CD4-positive, alpha-beta T cell (primary cell): ENCODE measurements at regions of chr7 and their contacts with region 1.

Region 1: DNA sequence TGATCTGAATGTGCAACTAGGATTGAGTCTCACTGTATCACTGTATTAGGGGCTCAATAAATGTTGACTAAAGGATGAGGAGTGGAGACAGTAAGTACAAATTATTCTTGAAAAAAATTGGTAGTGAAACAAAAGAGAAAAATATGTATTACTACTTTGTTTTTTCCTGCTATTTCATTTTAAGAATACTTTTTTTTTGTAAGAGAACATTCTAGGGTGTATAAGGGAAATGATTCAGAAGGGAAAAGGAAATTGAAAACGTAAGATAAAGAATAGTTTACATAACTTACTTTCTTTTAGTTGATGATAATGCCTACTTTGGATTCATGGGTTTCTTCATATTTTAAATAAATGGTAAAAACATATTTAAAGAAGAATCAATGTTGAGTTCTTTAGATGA is 9.6 kb downstream of the CAPZA2 start:
- DNase-seq: no peak
- ATAC-seq: no peak
- H3K4me3 ChIP-seq: no peak overlapping the region
- H3K4me3 Mint-ChIP-seq: no peak overlapping the region
- H3K27ac ChIP-seq: no peak overlapping the region
- H3K27ac Mint-ChIP-seq: peak overlapping the region; percentile 40
- H3K4me1 ChIP-seq: peaks cover 15% of the 10 kb centered on the region
- H3K4me1 Mint-ChIP-seq: peaks cover 74% of the 10 kb centered on the region
- H3K27me3 ChIP-seq: no peaks in the 10 kb centered on the region
- H3K27me3 Mint-ChIP-seq: no peaks in the 10 kb centered on the region
- CTCF ChIP-seq: no peak

Region 2: DNA sequence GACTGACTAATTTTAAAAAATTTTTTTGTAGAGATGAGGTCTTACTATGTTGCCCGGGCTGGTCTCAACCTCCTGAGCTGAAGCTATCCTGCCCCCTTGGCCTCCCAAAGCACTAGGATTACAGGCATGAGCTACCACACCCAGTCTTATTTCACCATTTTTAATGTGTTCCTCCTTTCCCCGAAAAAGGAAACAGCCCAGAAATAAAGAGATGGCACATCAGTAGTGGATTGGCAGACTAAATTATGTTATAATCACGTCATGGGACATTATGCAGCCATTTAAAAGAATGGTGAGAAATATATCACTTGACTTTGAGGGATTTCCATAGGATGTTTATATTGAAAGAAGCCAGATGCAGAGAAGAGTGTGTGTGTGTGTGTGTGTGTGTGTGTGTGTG is 30.8 kb after region 1 on chr7:
- CTCF ChIA-PET with region 1: no interaction called
- POLR2A ChIA-PET with region 1: no interaction called
- intact Hi-C with region 1: no loop called
- DNase-seq: no peak
- ATAC-seq: no peak
- H3K4me3 ChIP-seq: no peak overlapping the region
- H3K4me3 Mint-ChIP-seq: no peak overlapping the region
- H3K27ac ChIP-seq: no peak overlapping the region
- H3K27ac Mint-ChIP-seq: no peak overlapping the region
- H3K4me1 ChIP-seq: no peaks in the 10 kb centered on the region
- H3K4me1 Mint-ChIP-seq: peaks cover 5% of the 10 kb centered on the region
- H3K27me3 ChIP-seq: no peaks in the 10 kb centered on the region
- H3K27me3 Mint-ChIP-seq: no peaks in the 10 kb centered on the region
- CTCF ChIP-seq: no peak

Region 3: DNA sequence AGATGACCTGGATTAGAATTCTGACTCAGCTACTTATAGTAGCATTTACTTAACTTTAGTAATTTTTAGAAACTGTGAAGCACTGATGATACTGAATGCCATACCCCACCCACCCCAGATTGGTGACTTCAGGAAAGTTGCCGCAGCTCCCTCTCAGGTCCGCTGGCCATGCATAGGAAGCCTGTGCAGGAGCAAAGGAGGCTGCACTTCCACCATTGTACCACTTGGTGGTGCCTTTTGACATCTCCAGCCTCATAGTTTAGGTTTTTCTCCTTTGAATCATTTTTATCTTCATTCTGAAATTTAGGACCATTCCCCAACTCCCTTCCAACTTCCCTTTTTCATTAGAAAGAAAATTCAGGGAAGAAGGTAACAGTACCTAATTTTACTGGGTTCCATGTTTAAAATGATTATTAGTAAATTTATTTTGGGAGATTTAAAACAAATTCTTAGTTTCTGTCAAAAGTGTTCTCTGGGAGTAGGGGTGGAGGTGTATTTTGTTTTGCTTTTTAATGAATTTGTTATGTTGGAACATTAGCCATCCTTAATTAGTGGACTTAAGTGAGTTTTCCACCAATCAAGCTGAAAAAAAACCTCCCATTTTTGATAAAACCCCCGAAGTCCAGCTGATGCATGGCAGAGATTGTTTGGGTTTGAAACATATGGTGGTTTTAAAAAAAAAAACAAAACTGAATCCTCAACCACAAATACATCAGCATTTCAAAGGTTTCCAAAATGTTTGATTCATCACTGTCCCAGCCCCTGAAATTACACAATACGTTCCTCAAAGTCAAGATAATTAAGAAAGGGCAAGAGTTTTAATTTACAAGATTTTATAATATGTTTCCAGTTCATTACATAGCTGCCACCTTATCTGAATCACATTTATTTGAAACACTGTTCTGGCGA is 341.2 kb after region 1 on chr7:
- CTCF ChIA-PET with region 1: no interaction called
- POLR2A ChIA-PET with region 1: no interaction called
- intact Hi-C with region 1: no loop called
- DNase-seq: peak in 12 of 14 experiments; percentile 3 to 62 (median 14)
- ATAC-seq: peak; percentile 65
- H3K4me3 ChIP-seq: no peak overlapping the region
- H3K4me3 Mint-ChIP-seq: no peak overlapping the region
- H3K27ac ChIP-seq: no peak overlapping the region
- H3K27ac Mint-ChIP-seq: no peak overlapping the region
- H3K4me1 ChIP-seq: no peaks in the 10 kb centered on the region
- H3K4me1 Mint-ChIP-seq: no peaks in the 10 kb centered on the region
- H3K27me3 ChIP-seq: no peaks in the 10 kb centered on the region
- H3K27me3 Mint-ChIP-seq: no peaks in the 10 kb centered on the region
- CTCF ChIP-seq: peak; percentile 83

Region 4: DNA sequence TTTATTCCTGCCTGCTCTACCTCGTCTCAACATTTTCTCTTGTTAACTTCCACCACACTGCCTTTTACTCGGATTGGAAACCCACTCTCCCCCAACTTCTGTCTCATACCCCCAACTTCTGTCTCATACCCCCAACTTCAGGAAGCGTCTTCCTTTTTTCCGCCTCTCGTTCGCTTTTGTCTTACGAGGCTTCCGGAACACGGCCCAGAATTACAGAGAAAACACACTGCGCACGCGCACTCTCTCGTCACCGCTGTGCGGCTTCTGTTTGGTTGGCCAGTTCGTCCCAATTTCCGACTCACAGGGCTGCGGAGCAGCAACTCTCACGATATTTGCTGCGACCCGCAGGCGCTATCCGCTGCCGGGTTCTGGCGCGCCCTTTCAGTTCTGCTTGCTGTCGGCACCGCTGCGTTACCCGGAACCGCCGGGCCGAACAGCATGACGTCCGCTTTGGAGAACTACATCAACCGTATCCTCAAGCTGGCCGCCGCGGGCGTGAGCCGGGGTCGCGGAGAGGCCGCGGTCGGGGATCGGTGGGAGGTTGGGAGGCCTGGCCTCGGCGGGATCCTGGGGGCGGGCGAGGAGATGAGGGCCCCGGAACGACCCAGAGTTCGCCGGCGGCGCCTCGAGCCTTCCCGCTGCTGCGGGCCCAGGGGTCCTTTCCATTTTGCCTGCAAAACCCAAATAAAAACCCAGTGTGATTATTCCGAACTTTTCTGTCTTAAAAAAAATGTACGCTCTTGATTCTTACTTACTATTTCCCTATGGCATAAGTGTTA is 1311.9 kb after region 1 on chr7 and contains the start of gene LSM8:
- CTCF ChIA-PET with region 1: no interaction called
- POLR2A ChIA-PET with region 1: no interaction called
- intact Hi-C with region 1: loop called in 1 of 2 experiments (anchors 5 kb)
- DNase-seq: peak; percentile 95 to 99 (median 96)
- ATAC-seq: peak; percentile 96
- H3K4me3 ChIP-seq: peak within 1 kb of the TSS; percentile 88
- H3K4me3 Mint-ChIP-seq: peak within 1 kb of the TSS; percentile 96
- H3K27ac ChIP-seq: peak within 1 kb of the TSS; percentile 86 to 95
- H3K27ac Mint-ChIP-seq: peak within 1 kb of the TSS; percentile 96
- H3K4me1 ChIP-seq: peaks cover 13% of the 10 kb centered on the region
- H3K4me1 Mint-ChIP-seq: peaks cover 51% of the 10 kb centered on the region
- H3K27me3 ChIP-seq: no peaks in the 10 kb centered on the region
- H3K27me3 Mint-ChIP-seq: no peaks in the 10 kb centered on the region
- CTCF ChIP-seq: no peak
- total RNA-seq, gene LSM8: 47.1 to 49.4 TPM